GM12878 (cell line): ENCODE measurements at regions of chr12 and their contacts with region 1.

Region 1: GRCh38 chr12:80778005-80778541 is 61.4 kb downstream of the MYF5 start:
- DNase-seq: peak; percentile 99
- ATAC-seq: peak; percentile 95
- H3K4me3 ChIP-seq: 0 out of 2 replicates have a peak overlapping the region, but pooled peaks have one; percentile 35
- H3K27ac ChIP-seq: peak overlapping the region; percentile 95
- H3K4me1 ChIP-seq: peaks cover 19% of the 10 kb centered on the region
- H3K27me3 ChIP-seq: no peaks in the 10 kb centered on the region
- CTCF ChIP-seq: no peak
- EP300 ChIP-seq: peak; percentile 92 to 93; a peak in 3 of 4 replicates
- POLR2A ChIP-seq: no peak
- RAD21 ChIP-seq: no peak

Region 2: GRCh38 chr12:80200408-80200807 is 577.7 kb before region 1 on chr12:
- CTCF ChIA-PET with region 1: no interaction called
- POLR2A ChIA-PET with region 1: no interaction called
- RAD21 ChIA-PET with region 1: no interaction called
- SMC1A ChIA-PET with region 1: no interaction called
- in situ Hi-C with region 1: loop called (anchors 10 kb)
- intact Hi-C with region 1: no loop called
- DNase-seq: no peak
- ATAC-seq: no peak
- H3K4me3 ChIP-seq: no peak overlapping the region
- H3K27ac ChIP-seq: no peak overlapping the region
- H3K4me1 ChIP-seq: no peaks in the 10 kb centered on the region
- H3K27me3 ChIP-seq: no peaks in the 10 kb centered on the region
- CTCF ChIP-seq: no peak
- EP300 ChIP-seq: no peak
- POLR2A ChIP-seq: no peak
- RAD21 ChIP-seq: no peak

Region 3: DNA sequence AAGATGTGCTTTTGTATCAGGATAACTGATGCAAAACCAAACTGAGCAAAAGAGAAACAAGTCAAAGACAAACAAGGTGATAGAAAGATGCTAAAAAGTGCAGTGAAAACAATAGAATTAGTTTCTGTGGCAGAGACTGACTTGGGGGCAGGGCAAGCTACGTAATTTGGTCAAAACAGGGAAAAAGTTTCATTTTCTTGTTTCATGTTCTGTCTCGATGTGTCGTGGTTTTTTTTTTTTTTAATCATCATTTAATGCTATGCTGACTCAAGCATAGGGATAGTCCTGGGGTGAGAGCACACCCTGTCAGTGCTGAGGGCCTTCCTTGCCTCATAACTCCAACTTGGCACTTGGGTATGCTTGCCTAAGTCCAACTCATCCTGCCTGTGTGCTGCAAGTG is 478.1 kb before region 1 on chr12:
- CTCF ChIA-PET with region 1: no interaction called
- POLR2A ChIA-PET with region 1: no interaction called
- RAD21 ChIA-PET with region 1: no interaction called
- SMC1A ChIA-PET with region 1: no interaction called
- in situ Hi-C with region 1: loop called (anchors 10 kb)
- intact Hi-C with region 1: no loop called
- DNase-seq: peak; percentile 76
- ATAC-seq: peak; percentile 88
- H3K4me3 ChIP-seq: peak overlapping the region; percentile 46; the same call in 1 of the 2 replicates
- H3K27ac ChIP-seq: peak overlapping the region; percentile 73
- H3K4me1 ChIP-seq: peaks cover 26% of the 10 kb centered on the region
- H3K27me3 ChIP-seq: no peaks in the 10 kb centered on the region
- CTCF ChIP-seq: no peak
- EP300 ChIP-seq: peak; percentile 90 to 96
- POLR2A ChIP-seq: no peak
- RAD21 ChIP-seq: no peak

Region 4: GRCh38 chr12:80794551-80794950 is 16.5 kb after region 1 on chr12:
- CTCF ChIA-PET with region 1: interaction called, 7 read pairs
- POLR2A ChIA-PET with region 1: interaction called, 4 read pairs
- RAD21 ChIA-PET with region 1: interaction called, 3 read pairs
- SMC1A ChIA-PET with region 1: interaction called, 23 read pairs
- in situ Hi-C with region 1: no loop called
- intact Hi-C with region 1: no loop called
- DNase-seq: no peak
- ATAC-seq: no peak
- H3K4me3 ChIP-seq: no peak overlapping the region
- H3K27ac ChIP-seq: no peak overlapping the region
- H3K4me1 ChIP-seq: no peaks in the 10 kb centered on the region; the same call in 1 of the 2 replicates
- H3K27me3 ChIP-seq: no peaks in the 10 kb centered on the region
- CTCF ChIP-seq: no peak
- EP300 ChIP-seq: no peak
- POLR2A ChIP-seq: no peak
- RAD21 ChIP-seq: no peak

Region 5: DNA sequence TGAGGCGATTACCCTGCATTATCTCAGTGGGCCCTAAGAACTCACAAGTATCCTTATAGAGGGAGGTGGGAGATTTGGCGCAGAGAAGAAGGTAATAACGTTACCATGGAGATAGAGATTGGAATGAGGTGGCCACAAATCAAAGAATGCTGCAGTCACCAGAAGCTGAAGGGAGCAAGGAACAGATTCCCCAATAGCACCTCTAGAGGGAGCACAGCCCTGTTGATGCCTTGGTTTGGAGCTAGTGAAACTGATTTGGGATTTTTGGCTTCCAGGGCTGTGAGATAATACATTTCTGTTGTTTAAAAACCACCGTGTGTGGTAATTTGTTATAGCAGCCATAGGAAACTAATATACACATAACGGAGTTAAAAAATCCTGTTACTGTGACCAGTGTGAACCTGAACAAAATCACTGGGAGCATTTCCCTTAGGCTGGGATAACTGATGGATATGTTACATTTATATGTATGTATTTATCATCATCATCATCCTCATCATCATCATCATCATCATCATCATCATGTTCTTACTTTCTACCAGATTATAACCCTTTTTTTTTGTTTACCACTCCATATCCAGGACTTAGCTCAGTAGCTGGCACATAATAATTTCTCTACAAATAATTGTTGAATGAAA is 59.4 kb after region 1 on chr12:
- CTCF ChIA-PET with region 1: interaction called, 6 read pairs
- POLR2A ChIA-PET with region 1: no interaction called
- RAD21 ChIA-PET with region 1: interaction called, 21 read pairs
- SMC1A ChIA-PET with region 1: interaction called, 25 read pairs
- in situ Hi-C with region 1: no loop called
- intact Hi-C with region 1: no loop called
- DNase-seq: no peak
- ATAC-seq: peak; percentile 90
- H3K4me3 ChIP-seq: no peak overlapping the region
- H3K27ac ChIP-seq: no peak overlapping the region
- H3K4me1 ChIP-seq: 0 out of 2 replicates have a peak, but pooled peaks cover 2% of the 10 kb centered on the region
- H3K27me3 ChIP-seq: no peaks in the 10 kb centered on the region
- CTCF ChIP-seq: peak; percentile 56 to 73 (median 68)
- EP300 ChIP-seq: no peak
- POLR2A ChIP-seq: no peak
- RAD21 ChIP-seq: peak; percentile 42